Activated CD4-positive, alpha-beta memory T cell treated with anti-CD3 and anti-CD28 coated beads for 36 hours (primary cell): ENCODE measurements at regions of chr5 and their contacts with region 1.

Region 1: DNA sequence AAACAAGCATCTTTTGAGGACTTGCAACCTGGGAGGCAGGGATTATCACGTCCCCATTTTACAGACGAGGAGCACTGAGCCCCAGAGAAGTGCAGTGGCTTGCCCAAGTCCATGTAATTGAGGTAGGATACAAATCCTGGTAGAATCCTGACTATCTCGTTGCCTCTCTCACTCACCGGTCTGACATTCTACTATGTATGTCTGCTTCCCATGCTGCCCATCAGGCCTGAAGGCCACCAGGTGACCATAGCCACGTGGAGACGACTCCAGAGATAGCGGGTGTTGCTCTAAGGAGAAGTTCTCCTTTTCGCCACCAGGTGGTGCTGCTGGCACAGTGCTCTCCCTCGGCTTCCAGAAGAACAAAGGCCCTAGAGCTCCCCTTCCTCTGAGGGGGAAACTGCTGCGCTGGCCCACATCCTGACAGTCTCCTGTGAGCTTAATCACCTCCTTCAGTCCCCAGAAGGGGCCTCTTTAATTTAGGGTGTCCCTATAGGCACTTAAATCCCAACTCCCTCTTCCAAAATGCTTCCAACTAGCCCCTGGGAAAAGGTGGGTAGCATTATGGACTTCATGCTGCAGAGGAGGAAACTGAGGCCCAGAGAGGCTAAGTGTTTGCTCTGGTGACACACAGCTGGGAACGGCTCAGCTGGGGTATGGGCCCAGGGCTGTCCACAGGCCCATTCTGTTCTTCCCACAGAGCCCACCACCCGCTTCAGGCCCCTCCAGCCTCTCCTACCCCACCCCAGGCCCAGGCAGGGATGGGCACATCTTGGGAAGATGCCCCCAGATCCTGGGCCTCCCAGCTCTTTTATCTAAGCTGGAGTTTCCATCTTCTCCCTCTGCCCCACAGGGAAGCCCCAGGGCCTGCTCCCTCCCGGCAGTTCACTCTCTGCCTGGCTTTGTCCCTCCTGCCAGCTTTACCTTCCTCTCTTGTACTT is 6.4 kb downstream of the SLC34A1 start:
- DNase-seq: peak; percentile 94
- H3K4me3 Mint-ChIP-seq: peak overlapping the region; percentile 17
- H3K27ac Mint-ChIP-seq: peak overlapping the region; percentile 87
- H3K4me1 Mint-ChIP-seq: peaks cover 41% of the 10 kb centered on the region
- H3K27me3 Mint-ChIP-seq: no peaks in the 10 kb centered on the region

Region 2: DNA sequence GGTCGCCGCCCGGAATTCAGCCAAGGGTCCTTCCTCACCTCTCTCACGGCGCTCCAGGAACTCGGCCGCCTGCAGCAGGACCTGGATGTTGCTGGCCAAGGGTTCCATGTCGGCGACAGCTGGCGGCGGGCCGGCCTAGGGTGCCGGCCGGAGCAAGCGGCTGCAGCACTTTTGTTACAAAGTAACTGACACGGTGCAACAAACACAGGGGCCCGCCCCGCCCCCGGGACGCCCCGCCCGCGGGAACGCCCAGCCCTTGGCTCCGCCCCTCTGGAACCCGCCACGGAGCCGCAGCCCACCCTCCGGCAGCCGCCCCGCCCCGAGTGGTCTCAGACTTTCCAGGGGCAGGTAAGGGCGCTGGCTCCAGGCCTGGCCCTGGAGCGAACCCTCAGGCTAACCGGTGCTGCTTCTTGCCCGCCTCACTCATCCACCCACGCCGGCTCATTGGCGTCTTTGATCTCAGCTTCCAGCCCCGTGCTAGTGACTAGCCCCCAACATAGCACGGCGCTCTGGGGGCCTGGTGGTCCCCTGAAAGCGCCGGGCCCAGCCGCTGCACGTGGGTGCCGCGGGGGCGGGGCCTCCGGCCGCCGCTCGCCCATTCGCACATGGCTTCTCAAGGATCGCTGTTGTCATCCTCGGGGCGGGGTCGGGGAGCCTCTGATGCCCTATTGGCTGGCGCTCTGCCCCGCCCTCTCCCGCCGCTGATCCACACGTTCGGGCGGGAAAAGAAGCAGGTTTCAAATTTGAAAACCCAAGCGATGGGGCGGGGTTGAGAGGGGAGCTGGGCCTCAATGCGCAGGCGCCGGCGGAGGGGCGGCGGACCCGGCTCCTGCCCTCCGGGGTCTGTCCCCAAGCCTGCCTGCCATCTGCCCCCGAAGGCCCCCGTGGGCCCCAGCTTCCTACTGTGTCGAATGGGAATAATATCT is 78.6 kb before region 1 on chr5 and contains the start of gene MXD3:
- CTCF ChIA-PET with region 1: interaction called, 52 read pairs
- POLR2A ChIA-PET with region 1: no interaction called
- intact Hi-C with region 1: no loop called
- DNase-seq: peak; percentile 98
- H3K4me3 Mint-ChIP-seq: peak within 1 kb of the TSS; percentile 78
- H3K27ac Mint-ChIP-seq: peak within 1 kb of the TSS; percentile 88
- H3K4me1 Mint-ChIP-seq: peaks cover 22% of the 10 kb centered on the region
- H3K27me3 Mint-ChIP-seq: peaks cover 1% of the 10 kb centered on the region
- total RNA-seq, gene MXD3: 31.2 to 33.4 TPM

Region 3: GRCh38 chr5:177362610-177363507 is 27.8 kb before region 1 on chr5:
- CTCF ChIA-PET with region 1: interaction called, 66 read pairs
- POLR2A ChIA-PET with region 1: interaction called, 20 read pairs
- intact Hi-C with region 1: loop called (anchors 1 kb)
- DNase-seq: peak; percentile 82
- H3K4me3 Mint-ChIP-seq: peak overlapping the region; percentile 69
- H3K27ac Mint-ChIP-seq: peak overlapping the region; percentile 51
- H3K4me1 Mint-ChIP-seq: peaks cover 73% of the 10 kb centered on the region
- H3K27me3 Mint-ChIP-seq: no peaks in the 10 kb centered on the region

Region 4: GRCh38 chr5:177425801-177426565 is 35.4 kb after region 1 on chr5:
- CTCF ChIA-PET with region 1: interaction called, 42 read pairs
- POLR2A ChIA-PET with region 1: interaction called, 13 read pairs
- intact Hi-C with region 1: loop called (anchors 1 kb)
- DNase-seq: peak; percentile 100
- H3K4me3 Mint-ChIP-seq: peak overlapping the region; percentile 87
- H3K27ac Mint-ChIP-seq: peak overlapping the region; percentile 94
- H3K4me1 Mint-ChIP-seq: peaks cover 35% of the 10 kb centered on the region
- H3K27me3 Mint-ChIP-seq: no peaks in the 10 kb centered on the region

Region 5: GRCh38 chr5:177446200-177447065 is 55.8 kb after region 1 on chr5 and contains the start of gene PRR7:
- CTCF ChIA-PET with region 1: interaction called, 178 read pairs
- POLR2A ChIA-PET with region 1: interaction called, 5 read pairs
- intact Hi-C with region 1: loop called (anchors 2 kb)
- DNase-seq: peak; percentile 77
- H3K4me3 Mint-ChIP-seq: peak within 1 kb of the TSS; percentile 67
- H3K27ac Mint-ChIP-seq: peak within 1 kb of the TSS; percentile 81
- H3K4me1 Mint-ChIP-seq: peaks cover 48% of the 10 kb centered on the region
- H3K27me3 Mint-ChIP-seq: no peaks in the 10 kb centered on the region
- total RNA-seq, gene PRR7: 13.3 to 13.6 TPM

Region 6: GRCh38 chr5:177516604-177517568 is 126.3 kb after region 1 on chr5 and contains the start of gene DDX41:
- CTCF ChIA-PET with region 1: interaction called, 15 read pairs
- POLR2A ChIA-PET with region 1: no interaction called
- intact Hi-C with region 1: no loop called
- DNase-seq: peak; percentile 98
- H3K4me3 Mint-ChIP-seq: peak within 1 kb of the TSS; percentile 88
- H3K27ac Mint-ChIP-seq: peak within 1 kb of the TSS; percentile 83
- H3K4me1 Mint-ChIP-seq: peaks cover 46% of the 10 kb centered on the region
- H3K27me3 Mint-ChIP-seq: no peaks in the 10 kb centered on the region
- total RNA-seq, gene DDX41: 143 to 145 TPM

Region 7: DNA sequence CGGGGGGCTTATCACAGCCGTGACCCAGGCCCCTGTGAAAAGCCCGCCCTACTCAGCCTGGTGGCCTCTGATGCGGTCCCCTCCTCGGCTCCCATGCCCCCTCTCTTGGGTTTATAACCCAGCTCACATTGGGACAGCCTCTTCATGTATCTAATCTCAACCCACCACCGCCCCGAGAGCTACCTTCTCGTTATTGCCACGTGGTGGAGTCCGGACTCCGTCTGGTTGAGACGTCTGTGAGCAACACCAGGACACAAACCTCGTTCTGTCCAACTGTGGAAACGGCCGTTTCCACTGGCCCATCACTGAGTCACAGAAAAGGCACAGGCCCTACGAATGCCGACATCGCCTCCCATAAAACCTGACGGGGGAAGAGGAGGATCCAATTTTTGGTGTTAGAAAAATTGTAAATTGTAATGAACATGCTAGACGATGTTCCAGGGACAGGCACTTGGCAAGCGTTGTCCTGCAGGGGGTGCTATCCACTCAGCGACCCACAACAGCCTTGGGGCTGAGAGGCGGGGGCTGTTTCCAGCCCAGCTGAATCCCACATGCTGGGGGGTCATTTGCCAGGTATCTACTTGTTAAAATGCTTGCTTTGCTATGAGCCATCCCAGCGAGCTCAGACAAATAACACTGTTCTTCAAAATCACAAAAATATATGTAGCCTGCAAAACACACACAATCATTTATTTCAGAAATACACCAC is 685.4 kb after region 1 on chr5:
- CTCF ChIA-PET with region 1: no interaction called
- POLR2A ChIA-PET with region 1: no interaction called
- intact Hi-C with region 1: no loop called
- DNase-seq: peak; percentile 85
- H3K4me3 Mint-ChIP-seq: peak overlapping the region; percentile 44
- H3K27ac Mint-ChIP-seq: no peak overlapping the region
- H3K4me1 Mint-ChIP-seq: no peaks in the 10 kb centered on the region
- H3K27me3 Mint-ChIP-seq: peaks cover 8% of the 10 kb centered on the region